Activated CD4-positive, alpha-beta T cell treated with anti-CD3 and anti-CD28 coated beads for 36 hours (primary cell): ENCODE measurements at regions of chr17 and their contacts with region 1.

Region 1: DNA sequence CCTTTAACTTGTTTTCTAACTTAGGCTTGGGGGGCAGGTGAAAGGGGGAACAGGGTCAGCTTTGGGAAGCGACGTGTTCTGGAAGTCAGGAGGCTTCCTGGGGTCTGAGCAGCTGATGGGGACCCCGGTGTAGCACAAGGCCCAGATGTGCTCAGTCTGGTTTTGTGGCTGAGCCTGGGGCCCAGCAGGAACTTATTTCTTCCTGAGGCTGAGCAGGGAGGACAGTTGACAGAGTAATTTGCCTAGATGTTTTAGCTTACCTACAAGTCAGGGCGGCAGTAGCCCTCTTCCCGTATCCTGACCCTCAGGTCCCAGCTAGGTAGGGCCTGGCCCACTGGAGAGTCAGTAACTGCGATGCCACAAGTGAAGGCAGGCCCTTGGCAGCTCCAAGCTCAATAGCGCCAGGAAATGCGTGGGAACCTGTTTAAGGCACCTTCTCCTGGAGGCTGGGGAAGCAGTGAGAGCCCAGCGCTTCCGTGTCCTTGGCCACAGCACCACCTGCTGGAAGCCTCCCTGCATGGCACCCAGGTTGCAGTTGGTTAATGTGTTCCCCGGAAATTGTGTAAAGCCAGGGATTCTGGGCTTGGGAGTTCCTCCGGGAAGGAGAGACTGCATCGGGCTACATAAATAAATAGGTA is 5.2 kb downstream of the CCR7 start:
- DNase-seq: peak; percentile 90
- ATAC-seq: no peak
- H3K4me3 Mint-ChIP-seq: peak overlapping the region; percentile 94
- H3K27ac Mint-ChIP-seq: peak overlapping the region; percentile 98
- H3K4me1 Mint-ChIP-seq: peaks cover 60% of the 10 kb centered on the region
- H3K27me3 Mint-ChIP-seq: no peaks in the 10 kb centered on the region

Region 2: GRCh38 chr17:39769974-39770587 is 790.0 kb before region 1 on chr17:
- CTCF ChIA-PET with region 1: no interaction called
- POLR2A ChIA-PET with region 1: interaction called, 4 read pairs
- intact Hi-C with region 1: loop called in 1 of 2 experiments (anchors 10 kb)
- DNase-seq: peak; percentile 78
- ATAC-seq: peak; percentile 80
- H3K4me3 Mint-ChIP-seq: peak overlapping the region; percentile 7
- H3K27ac Mint-ChIP-seq: peak overlapping the region; percentile 82
- H3K4me1 Mint-ChIP-seq: peaks cover 96% of the 10 kb centered on the region
- H3K27me3 Mint-ChIP-seq: no peaks in the 10 kb centered on the region

Region 3: GRCh38 chr17:40247926-40248495 is 312.1 kb before region 1 on chr17:
- CTCF ChIA-PET with region 1: no interaction called
- POLR2A ChIA-PET with region 1: no interaction called
- intact Hi-C with region 1: no loop called
- DNase-seq: no peak
- ATAC-seq: no peak
- H3K4me3 Mint-ChIP-seq: no peak overlapping the region
- H3K27ac Mint-ChIP-seq: no peak overlapping the region
- H3K4me1 Mint-ChIP-seq: peaks cover 22% of the 10 kb centered on the region
- H3K27me3 Mint-ChIP-seq: no peaks in the 10 kb centered on the region

Region 4: GRCh38 chr17:40399185-40399584 is 160.9 kb before region 1 on chr17:
- CTCF ChIA-PET with region 1: interaction called, 7 read pairs
- POLR2A ChIA-PET with region 1: no interaction called
- intact Hi-C with region 1: loop called in 1 of 2 experiments (anchors 1 kb)
- DNase-seq: no peak
- ATAC-seq: peak; percentile 47
- H3K4me3 Mint-ChIP-seq: no peak overlapping the region
- H3K27ac Mint-ChIP-seq: no peak overlapping the region
- H3K4me1 Mint-ChIP-seq: peaks cover 12% of the 10 kb centered on the region
- H3K27me3 Mint-ChIP-seq: no peaks in the 10 kb centered on the region

Region 5: DNA sequence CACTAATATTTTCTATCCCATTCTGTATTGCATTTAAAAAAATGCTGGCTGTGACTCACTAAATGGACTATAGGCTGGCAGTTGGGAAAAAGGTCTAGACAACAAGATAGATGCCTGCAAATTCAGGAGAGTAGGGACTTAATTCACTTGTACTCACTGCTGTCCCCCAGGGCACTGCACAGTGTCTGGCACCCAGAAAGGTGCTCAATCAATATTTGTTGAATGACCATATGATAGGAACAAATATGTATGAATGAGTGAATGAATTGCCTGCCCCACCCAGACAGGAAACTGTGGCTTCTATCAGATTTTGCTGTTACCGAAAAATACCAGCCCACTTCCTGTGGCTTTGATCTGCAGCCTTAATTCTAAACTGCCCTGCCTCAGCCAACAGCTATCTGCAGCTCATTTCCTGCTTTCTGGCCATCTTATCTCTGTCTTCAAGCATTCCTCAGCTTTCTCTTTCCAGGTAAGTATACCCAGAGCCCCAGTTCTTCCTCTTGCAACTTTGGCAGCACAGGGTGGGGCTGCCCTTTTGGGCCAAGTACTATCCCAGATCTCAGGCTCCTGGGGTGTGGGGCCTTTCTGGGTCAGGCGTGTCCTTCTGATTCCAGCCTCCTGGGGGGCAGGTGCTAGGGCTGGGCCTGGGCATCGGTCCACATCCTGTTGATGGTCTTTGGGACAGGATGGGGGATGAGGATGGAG is 43.3 kb before region 1 on chr17:
- CTCF ChIA-PET with region 1: no interaction called
- POLR2A ChIA-PET with region 1: no interaction called
- intact Hi-C with region 1: loop called in 1 of 2 experiments (anchors 1 kb)
- DNase-seq: peak; percentile 77
- ATAC-seq: peak; percentile 76
- H3K4me3 Mint-ChIP-seq: peak overlapping the region; percentile 76
- H3K27ac Mint-ChIP-seq: peak overlapping the region; percentile 73
- H3K4me1 Mint-ChIP-seq: peaks cover 57% of the 10 kb centered on the region
- H3K27me3 Mint-ChIP-seq: peaks cover 2% of the 10 kb centered on the region

Region 6: GRCh38 chr17:40598663-40599467 is 38.8 kb after region 1 on chr17:
- CTCF ChIA-PET with region 1: interaction called, 71 read pairs
- POLR2A ChIA-PET with region 1: interaction called, 195 read pairs
- intact Hi-C with region 1: loop called (anchors 1 kb)
- DNase-seq: peak; percentile 93
- ATAC-seq: peak; percentile 57
- H3K4me3 Mint-ChIP-seq: peak overlapping the region; percentile 65
- H3K27ac Mint-ChIP-seq: peak overlapping the region; percentile 97
- H3K4me1 Mint-ChIP-seq: peaks cover 97% of the 10 kb centered on the region
- H3K27me3 Mint-ChIP-seq: no peaks in the 10 kb centered on the region

Region 7: GRCh38 chr17:40632216-40632615 is 72.1 kb after region 1 on chr17:
- CTCF ChIA-PET with region 1: interaction called, 9 read pairs
- POLR2A ChIA-PET with region 1: interaction called, 15 read pairs
- intact Hi-C with region 1: no loop called
- DNase-seq: no peak
- ATAC-seq: no peak
- H3K4me3 Mint-ChIP-seq: no peak overlapping the region
- H3K27ac Mint-ChIP-seq: peak overlapping the region; percentile 66
- H3K4me1 Mint-ChIP-seq: peaks cover 13% of the 10 kb centered on the region
- H3K27me3 Mint-ChIP-seq: no peaks in the 10 kb centered on the region

Region 8: DNA sequence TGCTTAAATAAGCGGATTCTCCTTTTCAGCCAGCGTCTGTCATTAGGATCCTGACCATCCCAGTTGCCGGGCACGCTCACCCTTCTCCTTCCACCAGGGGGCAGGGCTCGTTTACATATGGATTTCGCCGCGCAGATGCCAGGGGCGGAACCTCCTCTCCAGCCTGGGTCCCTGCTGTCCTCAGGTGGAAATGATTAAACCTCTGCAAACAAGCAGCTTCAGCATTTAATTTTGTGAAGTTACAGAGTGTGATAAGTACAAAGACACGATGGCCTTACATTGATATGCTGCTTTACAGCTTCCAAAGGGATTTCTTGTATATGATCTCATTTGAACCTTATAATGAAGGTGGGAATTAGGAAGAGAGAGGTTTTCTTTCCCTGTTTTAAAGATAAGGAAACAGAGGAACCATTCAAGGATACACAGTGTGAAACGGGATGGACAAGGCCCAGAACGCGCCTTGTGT is 243.6 kb after region 1 on chr17:
- CTCF ChIA-PET with region 1: no interaction called
- POLR2A ChIA-PET with region 1: no interaction called
- intact Hi-C with region 1: no loop called
- DNase-seq: peak; percentile 89
- ATAC-seq: peak; percentile 93
- H3K4me3 Mint-ChIP-seq: no peak overlapping the region
- H3K27ac Mint-ChIP-seq: no peak overlapping the region
- H3K4me1 Mint-ChIP-seq: peaks cover 2% of the 10 kb centered on the region
- H3K27me3 Mint-ChIP-seq: peaks cover 30% of the 10 kb centered on the region

Region 9: DNA sequence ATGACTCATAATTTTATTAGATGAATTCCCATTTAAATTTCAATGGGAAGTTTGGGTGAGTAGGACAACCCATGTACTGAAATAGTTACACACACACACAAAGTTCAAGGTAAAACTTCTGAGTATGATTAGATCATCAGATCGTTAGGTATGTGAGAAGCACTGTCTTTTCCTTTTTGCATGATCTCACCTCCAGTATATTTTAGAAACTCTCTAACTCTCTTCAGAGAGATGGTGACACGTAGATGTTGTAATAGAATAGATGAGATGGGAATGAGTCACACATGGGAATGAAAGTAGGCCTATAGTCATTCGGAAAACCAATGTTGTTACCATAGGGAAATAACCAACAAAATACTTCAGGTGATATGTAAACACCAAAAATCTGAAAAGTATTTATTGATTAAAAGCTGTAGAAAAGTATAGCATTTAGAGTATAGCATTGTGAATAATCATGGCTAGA is 355.2 kb after region 1 on chr17:
- CTCF ChIA-PET with region 1: no interaction called
- POLR2A ChIA-PET with region 1: no interaction called
- intact Hi-C with region 1: loop called in 1 of 2 experiments (anchors 1 kb)
- DNase-seq: no peak
- ATAC-seq: peak; percentile 96
- H3K4me3 Mint-ChIP-seq: no peak overlapping the region
- H3K27ac Mint-ChIP-seq: no peak overlapping the region
- H3K4me1 Mint-ChIP-seq: peaks cover 7% of the 10 kb centered on the region
- H3K27me3 Mint-ChIP-seq: peaks cover 18% of the 10 kb centered on the region